MCF 10A (cell line): ENCODE measurements at regions of chr1 and their contacts with region 1.

Region 1: DNA sequence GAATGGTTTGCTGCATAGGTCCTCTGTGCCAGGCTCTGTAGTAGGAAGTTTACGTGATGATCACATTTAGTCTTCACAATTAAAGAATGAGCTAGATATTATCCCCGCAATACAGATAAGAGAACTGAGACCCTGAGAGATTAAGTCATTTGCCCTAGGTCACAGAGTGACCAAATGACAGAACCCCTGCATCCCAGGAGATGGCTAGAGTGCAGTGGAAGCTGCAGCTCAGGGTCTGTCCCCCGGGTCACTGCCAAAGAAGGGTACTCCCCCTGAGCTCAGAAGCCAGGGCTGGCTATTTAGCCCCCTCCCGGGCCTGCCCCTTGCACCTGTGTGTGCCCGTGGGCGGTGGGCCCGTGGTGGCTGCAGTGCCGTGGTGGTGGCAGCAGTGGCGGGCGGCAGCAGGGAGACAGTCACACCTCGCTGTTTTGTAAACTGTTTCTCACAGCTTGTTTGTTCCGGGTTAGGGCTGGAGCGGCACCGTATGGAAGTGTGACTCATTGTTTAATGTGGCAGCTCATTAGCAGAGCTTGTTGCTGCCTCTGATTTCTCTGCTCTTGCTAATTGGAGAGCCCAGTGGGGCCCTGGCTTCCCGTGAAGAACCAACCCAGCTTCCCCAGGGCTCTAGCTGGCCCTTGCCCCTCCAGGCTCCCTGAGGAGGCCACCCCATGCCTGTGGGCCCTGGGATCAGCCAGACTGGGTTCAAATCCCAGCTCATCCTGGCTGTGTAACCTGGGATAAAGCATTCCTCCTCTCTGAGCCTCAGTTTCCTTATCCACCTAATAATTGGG is 19.3 kb upstream of the FOXO6 start:
- DNase-seq: peak; percentile 62
- H3K4me3 Mint-ChIP-seq: no peak overlapping the region
- H3K27ac Mint-ChIP-seq: peak overlapping the region; percentile 2
- H3K4me1 Mint-ChIP-seq: peaks cover 6% of the 10 kb centered on the region
- H3K27me3 Mint-ChIP-seq: no peaks in the 10 kb centered on the region
- CTCF ChIP-seq: no peak

Region 2: GRCh38 chr1:41330588-41331545 is 11.1 kb before region 1 on chr1:
- CTCF ChIA-PET with region 1: interaction called, 10 read pairs
- POLR2A ChIA-PET with region 1: no interaction called
- intact Hi-C with region 1: no loop called
- DNase-seq: no peak
- H3K4me3 Mint-ChIP-seq: no peak overlapping the region
- H3K27ac Mint-ChIP-seq: no peak overlapping the region
- H3K4me1 Mint-ChIP-seq: peaks cover 4% of the 10 kb centered on the region
- H3K27me3 Mint-ChIP-seq: no peaks in the 10 kb centered on the region
- CTCF ChIP-seq: no peak

Region 3: GRCh38 chr1:41360993-41361753 is 19.2 kb after region 1 on chr1 and contains the start of gene FOXO6:
- CTCF ChIA-PET with region 1: interaction called, 9 read pairs
- POLR2A ChIA-PET with region 1: interaction called, 16 read pairs
- intact Hi-C with region 1: no loop called
- DNase-seq: peak; percentile 98
- H3K4me3 Mint-ChIP-seq: peak within 1 kb of the TSS; percentile 28
- H3K27ac Mint-ChIP-seq: no peak within 1 kb of the TSS
- H3K4me1 Mint-ChIP-seq: peaks cover 35% of the 10 kb centered on the region
- H3K27me3 Mint-ChIP-seq: peaks cover 15% of the 10 kb centered on the region
- CTCF ChIP-seq: peak; percentile 10
- total RNA-seq, gene FOXO6: 0.22 and 0.28 TPM in 2 replicates